AG04449 (cell line): ENCODE measurements at regions of chr10 and their contacts with region 1.

Region 1: DNA sequence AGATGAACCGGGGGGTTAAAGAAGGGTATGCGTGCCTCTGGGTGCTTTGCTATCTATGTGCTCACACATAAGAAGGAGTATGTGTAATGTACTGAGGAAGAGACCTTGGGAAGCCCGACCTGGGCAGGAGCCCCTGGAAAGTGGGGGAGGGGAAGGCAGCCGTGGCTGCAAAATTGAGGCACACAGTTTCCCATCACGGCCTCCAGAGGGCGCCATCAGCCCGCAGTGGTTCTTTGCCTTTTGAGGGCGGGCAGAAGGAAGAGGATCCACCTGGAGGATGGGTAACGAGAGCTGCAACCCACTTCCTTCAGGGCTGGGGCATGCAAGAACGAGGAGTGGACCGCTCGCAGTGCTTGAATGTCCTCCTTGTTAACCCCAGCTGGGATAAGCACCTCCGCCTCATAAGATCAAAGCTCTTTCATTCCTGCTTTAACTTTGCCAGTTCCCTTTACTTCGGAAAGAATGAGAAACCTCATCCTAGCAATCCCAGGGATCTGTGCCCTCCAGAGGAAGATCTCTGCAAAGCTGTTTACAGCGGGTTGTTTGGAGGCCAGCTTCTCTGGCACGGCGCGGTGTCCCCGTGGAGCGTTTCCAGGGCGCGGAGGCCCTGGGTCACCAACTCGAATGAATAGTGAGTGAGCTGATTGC is 77.9 kb downstream of the PCGF5 start:
- DNase-seq: no peak
- H3K4me3 ChIP-seq: peak overlapping the region; percentile 54
- CTCF ChIP-seq: peak; percentile 96

Region 2: GRCh38 chr10:91287276-91287675 is 11.1 kb before region 1 on chr10:
- CTCF ChIA-PET with region 1: interaction called, 103 read pairs
- POLR2A ChIA-PET with region 1: no interaction called
- DNase-seq: no peak
- H3K4me3 ChIP-seq: no peak overlapping the region
- CTCF ChIP-seq: no peak

Region 3: GRCh38 chr10:91349381-91349780 is 51.0 kb after region 1 on chr10:
- CTCF ChIA-PET with region 1: interaction called, 15 read pairs
- POLR2A ChIA-PET with region 1: no interaction called
- DNase-seq: peak; percentile 98
- H3K4me3 ChIP-seq: no peak overlapping the region
- CTCF ChIP-seq: no peak

Region 4: GRCh38 chr10:91374052-91374451 is 75.7 kb after region 1 on chr10:
- CTCF ChIA-PET with region 1: interaction called, 128 read pairs
- POLR2A ChIA-PET with region 1: no interaction called
- DNase-seq: no peak
- H3K4me3 ChIP-seq: no peak overlapping the region
- CTCF ChIP-seq: no peak

Region 5: DNA sequence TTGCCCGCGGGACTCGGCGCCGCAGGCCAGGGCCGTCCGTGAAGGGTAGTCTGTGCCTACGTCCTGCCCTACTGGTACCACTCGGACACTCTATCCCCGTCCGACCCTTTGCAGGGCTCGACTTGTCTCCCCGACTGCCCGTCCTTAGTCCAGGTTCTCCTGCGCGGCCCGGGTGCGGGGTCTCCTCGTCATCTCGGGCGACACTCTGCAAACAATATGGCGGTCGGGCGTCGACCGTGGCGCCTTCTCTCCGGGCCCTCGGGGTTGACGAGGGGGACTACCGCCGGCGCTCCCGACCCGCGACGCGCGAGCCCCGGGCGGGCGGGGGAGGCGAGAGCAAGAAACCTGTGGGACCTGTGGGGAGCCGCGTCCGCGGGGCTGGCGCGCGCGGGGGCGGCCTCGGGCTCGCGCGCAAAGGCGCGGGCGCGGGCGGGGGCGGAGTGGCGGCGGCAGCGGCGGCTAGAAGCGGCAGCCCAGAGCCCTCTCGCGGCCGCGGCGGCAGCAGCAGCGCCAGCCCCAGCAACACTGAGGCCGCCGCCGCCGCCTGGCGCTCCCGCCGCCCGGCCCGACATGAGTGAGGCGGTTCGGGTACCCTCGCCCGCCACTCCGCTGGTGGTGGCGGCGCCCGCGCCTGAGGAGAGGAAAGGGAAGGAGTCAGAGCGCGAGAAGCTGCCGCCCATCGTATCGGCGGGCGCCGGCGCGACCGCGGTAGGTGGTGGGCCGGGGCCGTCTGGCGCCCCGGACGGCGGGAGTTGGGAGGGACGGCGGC is 111.7 kb after region 1 on chr10 and contains the start of gene HECTD2:
- CTCF ChIA-PET with region 1: interaction called, 12 read pairs
- POLR2A ChIA-PET with region 1: no interaction called
- DNase-seq: no peak
- H3K4me3 ChIP-seq: peak within 1 kb of the TSS; percentile 79
- CTCF ChIP-seq: peak; percentile 38

Region 6: DNA sequence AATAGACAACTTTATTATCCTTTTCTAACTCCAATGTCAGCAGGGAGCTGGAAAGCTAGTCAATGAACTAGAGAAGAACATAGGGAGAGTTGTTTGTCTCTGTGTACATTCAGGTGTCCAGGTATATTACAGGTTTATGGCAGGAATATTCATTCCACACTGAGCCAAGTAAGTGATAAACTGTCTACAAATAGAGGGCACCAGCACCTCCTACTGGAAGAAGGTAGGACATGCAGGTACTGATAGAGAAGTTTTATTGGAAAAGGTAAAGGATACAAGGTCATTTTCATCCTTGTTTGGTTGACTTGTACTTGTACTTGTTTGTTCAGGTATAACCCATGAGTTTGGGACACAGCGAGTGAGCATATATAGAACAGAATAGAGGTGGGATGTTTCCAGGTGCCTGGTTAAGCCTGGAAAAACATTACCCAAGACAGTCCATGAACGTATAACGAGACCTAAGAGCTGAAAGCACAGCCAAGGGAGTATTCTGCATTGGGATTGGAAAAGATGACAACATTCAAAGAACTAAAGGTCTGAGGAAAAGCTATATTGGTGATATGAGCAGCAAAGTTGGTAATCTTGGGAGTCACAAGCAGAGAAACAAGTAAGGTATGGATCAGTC is 395.9 kb after region 1 on chr10:
- CTCF ChIA-PET with region 1: interaction called, 30 read pairs
- POLR2A ChIA-PET with region 1: no interaction called
- DNase-seq: no peak
- H3K4me3 ChIP-seq: no peak overlapping the region
- CTCF ChIP-seq: peak; percentile 72

Region 7: DNA sequence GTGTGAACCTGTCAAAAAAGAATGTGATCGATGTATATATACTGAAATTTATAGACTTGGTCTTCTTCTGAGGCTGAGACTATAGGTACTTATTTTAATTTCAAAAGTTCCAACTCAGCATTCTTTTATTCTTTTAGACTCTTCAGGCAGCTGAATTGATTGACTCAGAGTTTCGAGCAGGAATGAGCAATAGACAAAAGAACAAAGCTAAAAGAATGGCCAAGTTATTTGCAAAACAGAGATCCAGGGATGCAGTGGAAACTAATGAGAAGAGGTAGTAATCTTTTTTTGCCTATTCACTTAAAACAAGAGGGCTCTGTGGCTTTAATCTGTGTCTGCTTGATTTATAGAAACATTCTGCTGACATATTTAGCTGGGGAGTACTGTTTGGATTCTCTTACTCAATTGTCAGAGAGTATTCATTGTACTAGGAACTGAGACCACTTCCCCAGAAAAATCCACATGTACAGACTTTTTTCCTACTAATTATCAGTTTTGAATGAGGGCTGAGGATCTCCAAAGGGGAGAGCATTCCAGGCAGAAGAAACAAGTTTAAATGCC is 655.3 kb after region 1 on chr10:
- CTCF ChIA-PET with region 1: no interaction called
- POLR2A ChIA-PET with region 1: no interaction called
- DNase-seq: no peak
- H3K4me3 ChIP-seq: no peak overlapping the region
- CTCF ChIP-seq: no peak